ENCODE measurements at regions of chr18 and their contacts with region 1.

Region 1: GRCh38 chr18:24878289-24878688 is 417.9 kb downstream of the HRH4 start:
- DNase-seq: peak in 1 of 10 donors; percentile 47
- H3K4me3 ChIP-seq: peak overlapping the region in 6 of 59 donors; percentile 10 to 51 (median 28)
- H3K27ac ChIP-seq: no peak overlapping the region
- H3K27me3 ChIP-seq: no peaks in the 10 kb centered on the region
- CTCF ChIP-seq: peak in 55 of 56 donors; percentile 31 to 84 (median 69)

Region 2: DNA sequence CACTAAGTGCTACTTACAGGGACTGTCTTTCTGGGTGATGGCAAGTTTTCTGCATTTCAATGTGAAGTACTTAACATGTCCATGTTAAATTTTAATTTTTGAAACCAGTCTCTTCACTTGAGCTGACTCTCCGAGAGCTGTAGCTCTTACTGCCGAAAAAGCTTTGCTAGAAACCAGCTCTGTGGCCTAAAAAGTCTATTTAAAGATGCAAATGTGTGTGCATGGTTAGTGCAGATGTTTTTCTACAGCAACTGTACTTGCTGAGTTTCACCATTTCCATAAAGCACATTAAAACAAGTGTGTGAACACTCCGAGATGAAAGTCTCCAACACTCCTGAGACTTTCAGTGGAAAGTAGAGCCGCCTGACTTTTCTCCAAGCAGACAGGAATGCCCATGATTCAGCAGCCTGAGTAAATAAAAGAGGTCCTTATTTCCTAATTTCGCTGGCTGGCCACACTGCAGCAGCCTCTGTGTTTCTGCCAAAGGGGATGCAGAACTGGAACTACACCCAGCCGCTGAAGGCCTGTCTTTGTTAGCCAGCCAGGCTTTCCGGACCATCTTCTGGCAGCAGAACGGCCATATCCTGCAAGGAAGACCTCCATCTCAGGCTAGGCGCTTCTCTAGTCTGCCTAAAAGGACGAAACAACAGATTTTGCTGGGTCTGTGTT is 352.5 kb after region 1 on chr18:
- intact Hi-C with region 1: loop called (anchors 10 kb)
- DNase-seq: peak; percentile 47 to 90 (median 78)
- H3K4me3 ChIP-seq: peak overlapping the region in 54 of 59 donors; percentile 1 to 57 (median 34)
- H3K27ac ChIP-seq: peak overlapping the region in 58 of 59 donors; percentile 11 to 87 (median 69)
- H3K27me3 ChIP-seq: no peaks in the 10 kb centered on the region
- CTCF ChIP-seq: peak in 10 of 56 donors; percentile 5 to 46 (median 24)

Region 3: DNA sequence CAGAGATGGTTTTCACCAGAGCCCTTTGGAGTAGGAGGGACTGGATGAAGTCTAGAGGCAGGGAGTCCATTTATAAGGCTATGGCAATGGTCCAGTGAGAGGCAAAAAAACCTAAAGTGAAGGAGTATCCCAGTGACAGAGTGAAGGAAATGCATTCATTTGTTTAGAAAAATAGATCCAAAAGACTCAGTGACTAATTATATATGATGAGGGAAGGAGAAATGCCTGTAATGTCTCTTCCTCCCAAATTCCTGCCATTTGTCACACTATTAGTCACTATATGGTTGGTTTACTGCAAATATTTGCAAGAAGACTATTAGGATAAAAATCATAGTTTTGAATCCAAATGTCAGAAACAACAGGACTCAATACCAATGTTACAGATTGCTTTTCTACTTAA is 369.4 kb after region 1 on chr18:
- intact Hi-C with region 1: loop called in 1 of 2 experiments (anchors 5 kb)
- DNase-seq: no peak
- H3K4me3 ChIP-seq: no peak overlapping the region
- H3K27ac ChIP-seq: no peak overlapping the region
- H3K27me3 ChIP-seq: no peaks in the 10 kb centered on the region
- CTCF ChIP-seq: no peak

Region 4: DNA sequence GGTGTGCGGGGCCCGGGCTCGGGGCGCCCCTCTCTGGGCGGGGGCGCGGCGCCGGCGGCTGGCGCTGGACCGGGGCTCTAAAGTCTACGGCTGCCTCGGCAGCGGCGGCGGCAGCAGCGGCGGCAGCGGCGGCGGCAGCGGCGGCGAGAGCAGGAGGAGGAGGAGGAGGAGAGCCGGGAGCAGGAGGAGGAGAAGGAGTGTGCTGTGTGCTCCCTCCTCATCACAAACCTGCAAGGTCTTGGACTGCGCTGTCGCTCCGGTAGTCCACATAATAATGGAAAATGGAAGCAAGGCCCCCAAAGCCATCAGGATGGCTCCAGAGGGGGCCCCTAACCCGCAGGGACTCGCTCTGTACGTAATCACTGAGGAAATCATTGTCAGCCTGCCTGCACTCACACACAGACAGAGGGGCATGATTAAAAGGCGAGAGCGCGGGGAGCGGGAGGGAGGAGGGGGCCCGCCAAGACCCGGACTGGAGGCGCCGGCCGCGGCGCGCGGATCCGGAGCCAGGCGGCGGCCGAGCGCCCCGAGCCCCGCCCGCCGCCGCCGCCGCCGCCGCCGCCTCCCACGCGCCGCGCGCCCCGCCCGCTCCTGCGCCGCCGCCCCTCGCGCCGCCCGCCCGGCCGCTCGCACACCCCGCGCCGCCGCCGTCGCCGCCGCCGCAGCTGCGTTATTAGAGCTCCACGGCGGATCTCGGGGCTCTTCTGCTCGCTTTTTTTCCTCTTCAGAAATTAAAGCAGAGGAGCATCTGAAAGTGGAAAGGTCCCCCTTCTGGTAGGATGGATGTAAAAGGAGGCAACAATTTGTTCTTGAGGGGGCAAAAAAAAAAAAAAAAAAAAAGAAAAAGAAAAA is 473.7 kb after region 1 on chr18 and contains the start of gene ZNF521:
- intact Hi-C with region 1: loop called in 1 of 2 experiments (anchors 2 kb)
- DNase-seq: peak; percentile 72 to 90 (median 85)
- H3K4me3 ChIP-seq: peak within 1 kb of the TSS; percentile 54 to 89 (median 73)
- H3K27ac ChIP-seq: peak within 1 kb of the TSS; percentile 23 to 98 (median 91)
- H3K27me3 ChIP-seq: peaks cover 0 to 6% (median 0%) of the 10 kb centered on the region in 45 donors
- CTCF ChIP-seq: peak in 24 of 56 donors; percentile 11 to 40 (median 22)
- total RNA-seq, gene ZNF521: 12.9 to 41.3 (median 22.3) TPM

Region 5: GRCh38 chr18:25832001-25832604 is 953.8 kb after region 1 on chr18:
- intact Hi-C with region 1: loop called (anchors 1 to 10 kb)
- DNase-seq: peak in 8 of 10 donors; percentile 37 to 73 (median 50)
- H3K4me3 ChIP-seq: no peak overlapping the region
- H3K27ac ChIP-seq: no peak overlapping the region
- H3K27me3 ChIP-seq: peaks cover 0 to 2% (median 0%) of the 10 kb centered on the region in 45 donors
- CTCF ChIP-seq: peak; percentile 27 to 83 (median 70)

Region 6: DNA sequence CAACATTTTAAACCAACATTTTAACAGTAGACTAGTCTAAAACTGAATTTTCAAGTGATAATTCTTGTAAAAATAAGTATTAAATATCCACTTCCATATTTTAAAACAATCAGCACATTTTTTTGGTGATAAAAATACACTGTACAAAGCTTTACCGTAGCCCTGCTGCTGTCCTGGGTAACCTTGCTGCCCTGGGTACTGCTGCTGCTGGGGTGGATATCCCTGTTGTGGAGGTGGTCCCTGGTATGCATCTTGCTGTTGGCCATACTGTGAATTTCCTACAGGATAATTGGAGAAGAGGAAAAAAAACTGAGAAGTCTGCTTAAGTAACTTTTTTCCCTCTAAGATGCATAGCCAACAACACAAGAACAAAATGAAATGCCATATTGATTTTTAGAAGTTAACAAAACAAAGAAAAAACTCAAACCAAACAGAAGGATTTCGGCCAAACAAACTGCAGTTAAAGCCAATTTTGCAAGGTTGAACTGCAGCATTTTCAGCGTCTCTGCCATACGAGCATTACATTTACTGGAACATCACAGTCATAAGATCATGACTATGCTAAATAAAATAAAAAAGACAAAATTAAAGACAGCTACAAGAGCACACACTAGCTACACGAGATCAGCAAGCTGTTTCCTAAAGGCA is 1156.7 kb after region 1 on chr18:
- intact Hi-C with region 1: loop called in 1 of 2 experiments (anchors 10 kb)
- DNase-seq: no peak
- H3K4me3 ChIP-seq: no peak overlapping the region
- H3K27ac ChIP-seq: no peak overlapping the region
- H3K27me3 ChIP-seq: no peaks in the 10 kb centered on the region
- CTCF ChIP-seq: no peak